ENCODE measurements at regions of chr1 and their contacts with region 1.

Region 1: GRCh38 chr1:28877132-28877781 is 37.1 kb upstream of the EPB41 start:
- DNase-seq: peak; percentile 55 to 76
- H3K4me3 ChIP-seq: no peak overlapping the region
- H3K27ac ChIP-seq: no peak overlapping the region
- H3K4me1 ChIP-seq: 0 out of 2 replicates have a peak, but pooled peaks cover 1% of the 10 kb centered on the region
- H3K27me3 ChIP-seq: no peaks in the 10 kb centered on the region
- CTCF ChIP-seq: peak; percentile 84

Region 2: GRCh38 chr1:27300341-27301051 is 1576.8 kb before region 1 on chr1:
- CTCF ChIA-PET with region 1: interaction called, 10 read pairs
- POLR2A ChIA-PET with region 1: no interaction called
- intact Hi-C with region 1: no loop called
- DNase-seq: peak; percentile 43 to 80
- H3K4me3 ChIP-seq: no peak overlapping the region
- H3K27ac ChIP-seq: no peak overlapping the region
- H3K4me1 ChIP-seq: no peaks in the 10 kb centered on the region
- H3K27me3 ChIP-seq: no peaks in the 10 kb centered on the region
- CTCF ChIP-seq: peak; percentile 88

Region 3: DNA sequence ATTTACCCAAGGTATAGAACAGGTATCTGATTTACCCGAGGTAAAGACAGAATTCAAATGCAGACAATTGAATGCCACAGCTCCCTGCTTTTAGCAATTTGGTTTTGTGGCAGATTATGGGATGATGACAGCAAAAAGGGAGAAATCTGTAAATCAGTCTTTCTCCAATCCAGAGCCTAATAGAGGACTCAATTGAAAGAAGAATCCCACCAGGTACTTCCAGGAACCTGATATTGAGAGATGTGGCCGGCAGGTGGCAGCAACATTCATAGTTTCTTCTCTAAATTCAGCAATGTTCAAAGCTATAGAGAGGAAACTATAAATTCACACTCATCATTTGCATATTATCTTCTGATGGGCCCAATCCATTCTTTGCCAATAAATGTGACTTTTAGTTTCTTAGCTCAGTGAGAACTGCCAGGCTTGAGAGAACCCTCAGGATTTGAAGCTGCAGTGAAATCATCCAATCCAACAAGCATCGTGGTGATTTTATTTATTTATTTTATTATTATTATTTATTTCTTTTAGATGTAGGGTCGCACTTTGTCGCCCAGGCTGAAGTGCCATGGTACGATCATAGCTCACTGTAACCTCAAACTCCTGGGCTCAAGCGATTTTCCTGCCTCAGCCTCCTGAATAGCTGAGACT is 517.5 kb before region 1 on chr1:
- CTCF ChIA-PET with region 1: no interaction called
- POLR2A ChIA-PET with region 1: no interaction called
- intact Hi-C with region 1: loop called (anchors 10 kb)
- DNase-seq: peak; percentile 35 to 62
- H3K4me3 ChIP-seq: no peak overlapping the region
- H3K27ac ChIP-seq: no peak overlapping the region
- H3K4me1 ChIP-seq: peaks cover 4% of the 10 kb centered on the region; the same call in 1 of the 2 replicates
- H3K27me3 ChIP-seq: no peaks in the 10 kb centered on the region
- CTCF ChIP-seq: peak; percentile 73

Region 4: DNA sequence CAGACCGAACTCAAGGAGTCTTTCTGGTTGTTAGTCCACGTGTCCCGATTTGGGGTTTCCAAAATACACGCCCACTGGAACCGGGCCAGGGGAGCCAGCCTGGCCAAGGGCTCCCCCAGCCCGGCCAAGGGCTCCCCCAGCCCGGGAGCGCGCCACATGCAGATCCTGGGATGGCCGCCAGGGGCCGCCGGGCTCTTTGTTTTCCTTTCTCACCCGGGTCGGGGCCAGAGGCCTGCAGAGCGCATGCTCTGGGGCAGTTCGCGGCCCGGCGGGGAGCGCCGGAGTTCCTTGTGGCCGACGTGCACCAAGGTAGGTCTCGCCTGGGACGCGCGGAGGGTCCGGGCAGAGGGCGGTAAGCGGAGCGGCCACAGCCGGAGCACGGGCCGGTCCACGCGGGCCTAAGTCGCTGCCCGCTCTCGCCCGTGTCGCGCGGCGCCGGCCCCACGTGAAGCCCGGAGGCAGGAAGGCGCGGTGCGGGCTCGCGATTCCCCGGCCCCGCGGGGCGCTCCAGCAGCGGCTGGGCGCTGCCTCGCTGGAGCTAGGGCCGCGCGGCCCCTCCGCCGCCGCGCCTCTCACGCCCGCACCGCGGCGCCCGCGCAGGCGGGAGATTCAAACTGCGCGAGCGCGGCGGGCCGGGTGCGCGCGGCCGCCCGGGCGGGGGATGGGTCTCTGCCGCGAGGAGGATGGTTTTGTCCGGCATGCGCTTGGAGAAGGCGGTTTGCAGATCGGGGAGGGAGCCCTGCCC is 359.1 kb before region 1 on chr1:
- CTCF ChIA-PET with region 1: interaction called, 11 read pairs
- POLR2A ChIA-PET with region 1: no interaction called
- intact Hi-C with region 1: loop called (anchors 5 kb)
- DNase-seq: peak; percentile 66 to 93
- H3K4me3 ChIP-seq: peak overlapping the region; percentile 93
- H3K27ac ChIP-seq: peak overlapping the region; percentile 78
- H3K4me1 ChIP-seq: peaks cover 19% of the 10 kb centered on the region
- H3K27me3 ChIP-seq: no peaks in the 10 kb centered on the region
- CTCF ChIP-seq: peak; percentile 94

Region 5: GRCh38 chr1:28782011-28782410 is 95.2 kb before region 1 on chr1:
- CTCF ChIA-PET with region 1: interaction called, 25 read pairs
- POLR2A ChIA-PET with region 1: no interaction called
- intact Hi-C with region 1: loop called (anchors 1 kb)
- DNase-seq: no peak
- H3K4me3 ChIP-seq: no peak overlapping the region
- H3K27ac ChIP-seq: no peak overlapping the region
- H3K4me1 ChIP-seq: no peaks in the 10 kb centered on the region
- H3K27me3 ChIP-seq: no peaks in the 10 kb centered on the region
- CTCF ChIP-seq: no peak

Region 6: DNA sequence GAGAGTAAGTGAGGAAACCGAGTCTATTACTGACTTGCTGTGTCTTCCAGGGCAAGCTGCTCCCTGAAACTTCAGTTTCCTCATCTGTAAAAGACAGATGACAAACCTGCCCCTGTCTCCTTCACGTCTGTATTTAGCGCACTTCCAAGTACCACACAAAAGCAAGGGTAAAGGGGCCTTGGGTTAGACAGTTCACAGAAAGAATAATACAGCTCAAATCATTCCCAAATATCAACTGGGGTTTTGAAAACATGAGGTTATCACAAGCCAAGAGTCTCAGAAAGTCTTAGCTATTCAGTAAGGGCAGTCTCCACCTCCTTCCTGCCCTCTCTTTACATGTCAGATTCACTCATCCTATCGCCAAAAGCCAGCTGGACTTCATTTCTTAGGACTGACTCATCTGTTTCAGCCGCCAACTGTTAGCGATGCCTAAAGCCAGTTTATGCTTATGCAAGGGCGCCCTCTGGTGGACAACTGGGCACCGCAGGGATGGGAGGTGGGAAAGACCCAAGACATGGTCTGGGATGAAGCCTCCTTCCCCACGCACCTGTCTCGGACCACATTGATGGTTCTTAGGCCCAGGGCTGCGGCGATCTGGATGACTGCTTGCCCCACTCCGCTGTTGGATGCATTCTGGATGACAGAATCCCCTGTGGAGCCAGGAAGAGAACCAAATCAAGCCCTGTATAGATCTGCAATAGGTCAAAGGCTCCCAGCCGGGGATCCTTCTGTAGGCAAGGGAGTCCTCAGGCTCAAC is 325.5 kb after region 1 on chr1:
- CTCF ChIA-PET with region 1: interaction called, 23 read pairs
- POLR2A ChIA-PET with region 1: no interaction called
- intact Hi-C with region 1: loop called (anchors 1 kb)
- DNase-seq: peak; percentile 89 to 90
- H3K4me3 ChIP-seq: peak overlapping the region; percentile 23; the same call in 1 of the 2 replicates
- H3K27ac ChIP-seq: peak overlapping the region; percentile 63
- H3K4me1 ChIP-seq: peaks cover 9% of the 10 kb centered on the region
- H3K27me3 ChIP-seq: no peaks in the 10 kb centered on the region
- CTCF ChIP-seq: peak; percentile 87

Region 7: GRCh38 chr1:30522031-30523004 is 1645.1 kb after region 1 on chr1:
- CTCF ChIA-PET with region 1: no interaction called
- POLR2A ChIA-PET with region 1: no interaction called
- intact Hi-C with region 1: no loop called
- DNase-seq: no peak
- H3K4me3 ChIP-seq: no peak overlapping the region
- H3K27ac ChIP-seq: no peak overlapping the region
- H3K4me1 ChIP-seq: peaks cover 23% of the 10 kb centered on the region
- H3K27me3 ChIP-seq: no peaks in the 10 kb centered on the region
- CTCF ChIP-seq: no peak